PC-3 (cell line): ENCODE measurements at regions of chr19 and their contacts with region 1.

Region 1: GRCh38 chr19:35592226-35592625 is 6.3 kb downstream of the PMIS2 start:
- DNase-seq: peak; percentile 52
- ATAC-seq: no peak; the same call in 1 of the 2 replicates
- H3K4me3 ChIP-seq: no peak overlapping the region
- H3K27ac ChIP-seq: no peak overlapping the region
- H3K4me1 ChIP-seq: no peaks in the 10 kb centered on the region
- H3K27me3 ChIP-seq: no peaks in the 10 kb centered on the region
- CTCF ChIP-seq: peak; percentile 64

Region 2: GRCh38 chr19:35518313-35518712 is 73.9 kb before region 1 on chr19:
- CTCF ChIA-PET with region 1: no interaction called
- POLR2A ChIA-PET with region 1: no interaction called
- intact Hi-C with region 1: loop called (anchors 5 kb)
- DNase-seq: peak; percentile 84
- ATAC-seq: peak; percentile 78
- H3K4me3 ChIP-seq: no peak overlapping the region
- H3K27ac ChIP-seq: peak overlapping the region; percentile 38
- H3K4me1 ChIP-seq: peaks cover 19% of the 10 kb centered on the region
- H3K27me3 ChIP-seq: no peaks in the 10 kb centered on the region
- CTCF ChIP-seq: no peak

Region 3: GRCh38 chr19:35869327-35870123 is 277.3 kb after region 1 on chr19:
- CTCF ChIA-PET with region 1: no interaction called
- POLR2A ChIA-PET with region 1: no interaction called
- intact Hi-C with region 1: no loop called
- DNase-seq: peak; percentile 81
- ATAC-seq: peak; percentile 83
- H3K4me3 ChIP-seq: peak overlapping the region; percentile 59; the same call in 1 of the 2 replicates
- H3K27ac ChIP-seq: no peak overlapping the region
- H3K4me1 ChIP-seq: peaks cover 7% of the 10 kb centered on the region; the same call in 1 of the 2 replicates
- H3K27me3 ChIP-seq: no peaks in the 10 kb centered on the region
- CTCF ChIP-seq: no peak